GM12878 (cell line): ENCODE measurements at regions of chr2 and their contacts with region 1.

Region 1: DNA sequence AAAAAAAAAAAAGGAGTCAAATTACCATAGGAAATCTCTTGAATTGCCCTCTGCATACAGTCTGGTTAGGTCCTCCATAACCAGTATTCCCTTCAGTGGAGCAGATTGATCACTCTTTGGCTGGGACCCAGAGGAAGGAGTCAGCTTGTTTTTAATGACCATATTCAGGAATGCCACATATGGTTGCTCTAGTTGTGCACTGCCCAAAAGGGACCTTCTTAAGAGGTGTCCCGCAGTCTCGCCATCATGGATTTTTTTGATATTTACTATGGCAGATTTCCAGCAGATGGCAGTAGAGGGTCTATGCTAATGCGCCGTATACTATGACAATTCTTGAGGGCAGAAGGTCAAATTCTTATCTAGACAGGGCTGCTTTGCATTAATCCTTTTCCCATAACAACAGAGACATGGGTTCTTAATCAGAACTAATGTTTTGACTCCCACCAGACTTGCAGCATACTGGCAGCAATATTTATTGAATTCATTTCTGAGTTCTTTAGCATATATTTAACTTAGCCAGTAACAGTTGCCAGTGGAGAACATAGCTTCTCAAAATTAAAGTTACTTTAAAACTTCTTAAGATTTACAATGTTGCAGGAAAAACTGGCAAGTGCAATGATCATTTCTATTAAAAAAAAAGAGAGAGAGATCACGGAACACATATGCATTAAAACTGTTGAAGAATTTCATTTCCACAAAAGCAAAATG is 31.8 kb upstream of the INPP4A start:
- DNase-seq: peak; percentile 54
- ATAC-seq: peak; percentile 98
- H3K4me3 ChIP-seq: no peak overlapping the region
- H3K27ac ChIP-seq: no peak overlapping the region
- H3K4me1 ChIP-seq: no peaks in the 10 kb centered on the region; the same call in 1 of the 2 replicates
- H3K27me3 ChIP-seq: no peaks in the 10 kb centered on the region; a peak in 1 of 4 replicates
- CTCF ChIP-seq: peak; percentile 65 to 81 (median 80)
- EP300 ChIP-seq: no peak
- POLR2A ChIP-seq: no peak
- RAD21 ChIP-seq: peak; percentile 94

Region 2: DNA sequence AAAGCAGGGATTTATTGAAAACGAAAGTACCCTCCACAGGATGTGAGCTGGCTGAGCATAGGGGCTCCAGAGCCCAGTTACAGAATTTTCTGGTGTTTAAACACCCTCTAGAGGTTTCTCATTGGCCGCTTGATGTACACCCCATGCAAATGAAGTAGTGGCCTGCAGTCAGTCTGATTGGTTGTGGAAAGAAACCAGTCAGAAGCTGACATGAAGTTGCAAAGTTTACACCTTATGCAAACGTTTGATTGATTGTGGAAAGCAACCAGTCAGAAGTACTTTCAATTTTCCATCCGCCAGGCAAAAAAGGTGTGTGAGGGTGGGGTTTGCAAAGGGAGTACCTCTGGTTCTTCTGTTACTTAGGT is 263.6 kb before region 1 on chr2:
- CTCF ChIA-PET with region 1: no interaction called
- POLR2A ChIA-PET with region 1: no interaction called
- RAD21 ChIA-PET with region 1: no interaction called
- SMC1A ChIA-PET with region 1: no interaction called
- in situ Hi-C with region 1: no loop called
- intact Hi-C with region 1: no loop called
- DNase-seq: no peak
- ATAC-seq: peak; percentile 58
- H3K4me3 ChIP-seq: no peak overlapping the region
- H3K27ac ChIP-seq: no peak overlapping the region
- H3K4me1 ChIP-seq: no peaks in the 10 kb centered on the region
- H3K27me3 ChIP-seq: no peaks in the 10 kb centered on the region; a peak in 1 of 4 replicates
- CTCF ChIP-seq: no peak
- EP300 ChIP-seq: no peak
- POLR2A ChIP-seq: no peak
- RAD21 ChIP-seq: no peak

Region 3: DNA sequence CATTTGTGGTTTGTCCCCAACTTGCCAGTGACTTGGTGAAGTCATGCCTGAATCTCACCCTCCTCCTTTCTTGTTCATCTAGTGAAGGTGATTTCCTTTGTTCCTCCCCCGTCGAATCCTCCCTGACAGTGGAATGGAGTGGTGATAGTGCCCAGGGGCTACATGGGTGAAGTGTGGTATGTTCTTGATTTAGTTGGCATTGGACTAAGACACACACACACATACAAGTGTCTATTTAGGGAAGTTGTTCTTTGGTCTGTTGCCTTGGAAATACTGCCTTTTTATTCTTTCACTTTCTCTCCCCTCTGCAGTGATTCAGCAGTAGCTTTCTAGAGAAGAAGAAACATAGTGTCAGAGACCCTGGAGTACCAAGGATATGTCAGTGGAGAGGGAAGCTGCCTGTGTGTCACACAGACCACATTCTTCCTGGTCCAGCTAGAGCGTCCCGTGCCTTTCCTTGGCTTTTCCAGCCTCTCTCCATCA is 42.6 kb after region 1 on chr2:
- CTCF ChIA-PET with region 1: interaction called, 5 read pairs
- POLR2A ChIA-PET with region 1: no interaction called
- RAD21 ChIA-PET with region 1: interaction called, 5 read pairs
- SMC1A ChIA-PET with region 1: interaction called, 6 read pairs
- in situ Hi-C with region 1: no loop called
- intact Hi-C with region 1: loop called (anchors 2 kb)
- DNase-seq: peak; percentile 68
- ATAC-seq: peak; percentile 53
- H3K4me3 ChIP-seq: peak overlapping the region; percentile 58; the same call in 1 of the 2 replicates
- H3K27ac ChIP-seq: peak overlapping the region; percentile 77
- H3K4me1 ChIP-seq: peaks cover 82% of the 10 kb centered on the region
- H3K27me3 ChIP-seq: no peaks in the 10 kb centered on the region
- CTCF ChIP-seq: no peak
- EP300 ChIP-seq: no peak
- POLR2A ChIP-seq: 0 out of 2 replicates have a peak, but pooled peaks have one; percentile 35
- RAD21 ChIP-seq: no peak

Region 4: DNA sequence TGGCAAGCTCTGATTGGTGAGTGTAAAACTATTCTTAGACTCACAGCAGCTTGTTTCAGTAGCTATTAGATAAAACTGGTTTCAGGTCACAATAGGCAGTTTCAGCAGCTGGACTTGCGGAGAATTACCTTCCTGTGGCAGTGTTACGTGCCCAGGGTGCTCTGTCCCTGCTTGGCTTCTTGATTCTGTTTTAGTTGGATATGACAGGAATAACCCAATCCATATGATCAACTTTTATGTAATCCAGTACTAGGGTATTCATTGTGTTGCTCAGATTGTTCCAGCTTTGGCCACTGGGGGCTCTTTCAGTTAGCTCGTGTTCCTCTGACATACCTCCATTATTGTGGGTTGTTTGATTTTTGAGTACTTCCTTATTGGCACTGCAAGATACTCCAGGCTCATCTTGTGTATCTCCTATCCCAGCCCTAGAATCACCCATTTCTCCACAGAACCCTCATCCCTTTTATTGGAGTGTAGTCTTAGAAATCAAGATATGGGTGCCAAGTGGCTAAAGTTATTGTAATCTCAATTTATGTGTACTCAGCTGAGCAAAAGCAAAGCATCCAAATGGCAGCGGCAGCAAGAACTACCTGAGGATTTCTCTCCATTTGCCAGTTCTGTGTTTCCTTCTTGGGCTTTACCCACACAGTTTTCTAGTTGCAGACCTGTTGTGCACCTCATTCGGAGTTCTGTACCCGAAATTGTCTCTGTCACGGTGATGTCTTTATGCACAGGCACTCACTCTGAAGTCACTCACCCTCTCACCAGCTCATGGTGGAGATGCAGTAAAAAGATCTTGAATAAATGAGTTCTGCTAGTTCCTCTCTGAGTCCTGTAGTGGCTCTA is 75.1 kb after region 1 on chr2:
- CTCF ChIA-PET with region 1: interaction called, 12 read pairs
- POLR2A ChIA-PET with region 1: no interaction called
- RAD21 ChIA-PET with region 1: interaction called, 4 read pairs
- SMC1A ChIA-PET with region 1: interaction called, 4 read pairs
- in situ Hi-C with region 1: no loop called
- intact Hi-C with region 1: loop called (anchors 5 kb)
- DNase-seq: peak; percentile 92
- ATAC-seq: peak; percentile 69
- H3K4me3 ChIP-seq: peak overlapping the region; percentile 17; the same call in 1 of the 2 replicates
- H3K27ac ChIP-seq: peak overlapping the region; percentile 78
- H3K4me1 ChIP-seq: peaks cover 77% of the 10 kb centered on the region
- H3K27me3 ChIP-seq: no peaks in the 10 kb centered on the region
- CTCF ChIP-seq: peak; percentile 32 to 55 (median 49)
- EP300 ChIP-seq: peak in 1 of 2 experiments; percentile 69; a peak in 2 of 4 replicates
- POLR2A ChIP-seq: peak; percentile 57; the same call in 1 of the 2 replicates
- RAD21 ChIP-seq: no peak

Region 5: DNA sequence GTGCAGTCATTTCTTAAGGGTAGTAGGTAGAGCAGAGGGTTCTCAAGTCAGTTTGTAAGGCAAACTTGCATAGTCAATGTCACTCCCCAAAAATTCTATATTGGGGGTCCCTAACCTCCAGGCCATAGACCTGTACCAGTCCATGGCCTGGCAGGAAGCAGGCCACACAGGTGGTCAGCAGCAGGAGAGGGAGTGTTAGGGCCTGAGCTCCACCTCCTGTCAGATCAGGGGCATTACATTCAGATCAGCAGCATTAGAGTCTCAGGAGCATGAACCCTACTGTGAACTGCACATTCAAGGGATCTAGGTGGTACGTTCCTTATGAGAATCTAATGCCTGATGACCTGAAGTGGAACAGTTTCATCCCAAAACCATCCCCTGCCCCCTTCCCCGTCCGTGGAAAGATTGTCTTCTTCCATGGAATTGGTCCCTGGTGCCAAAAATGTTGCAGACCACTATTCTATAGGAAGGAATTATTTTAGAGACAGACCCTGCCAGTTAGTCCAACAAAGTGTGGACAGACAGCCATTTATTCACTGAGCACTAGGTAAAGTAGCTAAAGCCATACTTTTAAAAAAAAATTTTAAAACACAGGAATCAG is 188.7 kb after region 1 on chr2:
- CTCF ChIA-PET with region 1: interaction called, 9 read pairs
- POLR2A ChIA-PET with region 1: no interaction called
- RAD21 ChIA-PET with region 1: interaction called, 4 read pairs
- SMC1A ChIA-PET with region 1: interaction called, 7 read pairs
- in situ Hi-C with region 1: loop called (anchors 5 kb)
- intact Hi-C with region 1: loop called (anchors 1 kb)
- DNase-seq: no peak
- ATAC-seq: peak; percentile 97
- H3K4me3 ChIP-seq: no peak overlapping the region
- H3K27ac ChIP-seq: no peak overlapping the region
- H3K4me1 ChIP-seq: no peaks in the 10 kb centered on the region
- H3K27me3 ChIP-seq: no peaks in the 10 kb centered on the region
- CTCF ChIP-seq: peak; percentile 60 to 79 (median 78); a peak in 5 of 6 replicates
- EP300 ChIP-seq: no peak
- POLR2A ChIP-seq: no peak
- RAD21 ChIP-seq: peak; percentile 74

Region 6: DNA sequence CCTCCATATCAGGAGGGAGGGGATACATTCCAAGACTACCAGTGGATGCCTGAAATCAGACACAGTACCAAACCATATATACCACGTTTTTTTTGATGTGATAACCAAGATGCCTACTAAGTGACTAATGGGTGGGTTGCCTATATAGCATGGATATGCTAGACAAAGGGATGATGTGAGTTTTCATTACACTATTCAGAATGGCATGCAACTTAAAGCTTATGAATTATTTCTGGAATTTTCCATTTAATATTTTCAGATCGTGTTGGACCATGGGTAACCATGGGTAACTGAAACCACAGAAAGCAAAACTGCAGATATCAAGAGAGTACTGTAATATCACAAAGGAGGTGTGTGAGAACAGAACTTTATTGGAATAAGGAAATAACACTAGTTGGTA is 562.7 kb after region 1 on chr2:
- CTCF ChIA-PET with region 1: no interaction called
- POLR2A ChIA-PET with region 1: no interaction called
- RAD21 ChIA-PET with region 1: no interaction called
- SMC1A ChIA-PET with region 1: no interaction called
- in situ Hi-C with region 1: no loop called
- intact Hi-C with region 1: no loop called
- DNase-seq: no peak
- ATAC-seq: no peak
- H3K4me3 ChIP-seq: no peak overlapping the region
- H3K27ac ChIP-seq: no peak overlapping the region
- H3K4me1 ChIP-seq: no peaks in the 10 kb centered on the region
- H3K27me3 ChIP-seq: no peaks in the 10 kb centered on the region
- CTCF ChIP-seq: no peak
- EP300 ChIP-seq: no peak
- POLR2A ChIP-seq: no peak
- RAD21 ChIP-seq: no peak

Region 7: GRCh38 chr2:99066075-99066958 is 653.4 kb after region 1 on chr2:
- CTCF ChIA-PET with region 1: interaction called, 5 read pairs
- POLR2A ChIA-PET with region 1: no interaction called
- RAD21 ChIA-PET with region 1: interaction called, 3 read pairs
- SMC1A ChIA-PET with region 1: no interaction called
- in situ Hi-C with region 1: loop called (anchors 25 kb)
- intact Hi-C with region 1: no loop called
- DNase-seq: peak; percentile 64
- ATAC-seq: peak; percentile 98
- H3K4me3 ChIP-seq: 0 out of 2 replicates have a peak overlapping the region, but pooled peaks have one; percentile 21
- H3K27ac ChIP-seq: peak overlapping the region; percentile 69
- H3K4me1 ChIP-seq: peaks cover 10% of the 10 kb centered on the region; the same call in 1 of the 2 replicates
- H3K27me3 ChIP-seq: no peaks in the 10 kb centered on the region
- CTCF ChIP-seq: peak; percentile 51 to 68 (median 61); a peak in 5 of 6 replicates
- EP300 ChIP-seq: no peak
- POLR2A ChIP-seq: no peak
- RAD21 ChIP-seq: peak; percentile 83